HCT116 (cell line): ENCODE measurements at regions of chr4 and their contacts with region 1.

Region 1: GRCh38 chr4:70721747-70722146 is at the start of gene RUFY3:
- DNase-seq: no peak
- ATAC-seq: peak; percentile 44
- H3K4me3 ChIP-seq: no peak within 1 kb of the TSS
- H3K27ac ChIP-seq: no peak within 1 kb of the TSS
- H3K4me1 ChIP-seq: peaks cover 0 to 3% of the 10 kb centered on the region in 2 experiments; a peak in 1 of 4 replicates
- H3K27me3 ChIP-seq: no peaks in the 10 kb centered on the region
- CTCF ChIP-seq: no peak
- POLR2A ChIP-seq: no peak
- RAD21 ChIP-seq: no peak
- total RNA-seq, gene RUFY3: 32.9 TPM

Region 2: GRCh38 chr4:70734168-70734954 is 12.6 kb after region 1 on chr4:
- CTCF ChIA-PET with region 1: interaction called, 10 read pairs
- POLR2A ChIA-PET with region 1: no interaction called
- RAD21 ChIA-PET with region 1: no interaction called
- intact Hi-C with region 1: no loop called
- DNase-seq: no peak
- ATAC-seq: no peak
- H3K4me3 ChIP-seq: no peak overlapping the region
- H3K27ac ChIP-seq: no peak overlapping the region
- H3K4me1 ChIP-seq: peaks cover 13 to 25% of the 10 kb centered on the region in 2 experiments; a peak in 3 of 4 replicates
- H3K27me3 ChIP-seq: no peaks in the 10 kb centered on the region
- CTCF ChIP-seq: no peak
- POLR2A ChIP-seq: no peak
- RAD21 ChIP-seq: no peak